Breast epithelium (tissue), 4 donors: ENCODE measurements at regions of chr2 and their contacts with region 1.

Region 1: GRCh38 chr2:221767106-221768012 is 195.3 kb upstream of the EPHA4 start:
- DNase-seq: no peak
- H3K4me3 ChIP-seq: no peak overlapping the region
- H3K27ac ChIP-seq: no peak overlapping the region
- H3K4me1 ChIP-seq: no peaks in the 10 kb centered on the region
- H3K27me3 ChIP-seq: peaks cover 0 to 6% of the 10 kb centered on the region in 2 donors
- CTCF ChIP-seq: no peak
- POLR2A ChIP-seq: no peak

Region 2: DNA sequence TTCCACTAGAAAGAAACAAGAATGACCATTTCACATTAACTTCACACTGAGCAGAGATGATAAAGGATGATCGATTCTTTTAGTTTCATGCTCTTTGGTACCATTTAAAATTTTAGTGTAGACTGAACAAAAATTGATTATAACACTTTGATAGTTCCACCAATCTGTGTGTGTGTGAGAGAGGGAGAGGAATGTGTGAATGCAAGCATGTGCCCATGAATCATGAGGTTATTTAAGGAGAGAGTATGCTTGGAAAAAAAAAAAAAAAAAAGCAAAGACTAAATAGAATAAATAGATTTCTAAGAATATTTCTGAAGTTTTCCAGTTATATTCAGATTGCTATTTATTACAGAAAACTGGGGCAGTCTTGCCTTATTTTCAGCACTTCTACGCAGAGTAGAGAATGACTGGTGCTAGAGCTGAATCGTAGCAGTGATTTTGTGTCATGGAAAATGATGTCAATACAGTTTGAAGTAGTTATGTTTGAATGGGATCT is 1239.1 kb before region 1 on chr2:
- intact Hi-C with region 1: loop called (anchors 10 kb)
- DNase-seq: no peak
- H3K4me3 ChIP-seq: no peak overlapping the region
- H3K27ac ChIP-seq: no peak overlapping the region
- H3K4me1 ChIP-seq: no peaks in the 10 kb centered on the region
- H3K27me3 ChIP-seq: no peaks in the 10 kb centered on the region
- CTCF ChIP-seq: no peak
- POLR2A ChIP-seq: no peak

Region 3: DNA sequence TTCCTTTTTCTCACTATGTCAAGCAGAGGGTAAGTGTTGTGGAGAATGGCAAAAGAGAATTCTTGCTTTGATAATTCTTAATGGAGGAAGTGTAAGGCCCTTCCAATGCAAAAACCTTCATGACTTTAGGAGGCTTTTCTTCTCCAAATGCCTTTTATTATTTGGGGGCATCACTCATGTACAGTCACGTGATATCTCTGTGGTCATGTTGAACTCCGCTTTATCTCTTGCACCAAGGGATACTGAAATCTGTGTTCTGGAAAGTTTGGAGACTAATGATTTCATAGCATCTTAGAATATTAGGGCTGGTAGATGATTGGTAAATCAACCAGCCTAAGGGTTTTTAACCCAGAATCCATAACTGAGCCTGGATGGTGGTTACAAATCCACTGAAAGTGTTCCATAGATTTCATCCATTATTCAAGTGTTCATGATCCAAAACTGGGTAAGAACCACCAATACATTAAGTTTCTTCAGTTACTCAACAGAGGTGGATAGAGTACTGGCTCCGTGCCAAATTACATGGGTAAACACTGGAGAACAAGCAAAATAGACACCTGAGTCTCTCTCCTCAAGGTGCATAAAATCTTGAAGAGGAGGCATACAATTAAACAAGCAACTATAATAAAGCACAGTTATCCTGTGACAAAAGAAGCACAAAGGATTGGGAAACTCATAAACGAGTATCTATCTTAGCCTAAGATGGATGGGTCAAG is 25.7 kb before region 1 on chr2:
- intact Hi-C with region 1: no loop called
- DNase-seq: no peak
- H3K4me3 ChIP-seq: no peak overlapping the region
- H3K27ac ChIP-seq: no peak overlapping the region
- H3K4me1 ChIP-seq: no peaks in the 10 kb centered on the region
- H3K27me3 ChIP-seq: no peaks in the 10 kb centered on the region
- CTCF ChIP-seq: no peak
- POLR2A ChIP-seq: no peak